ENCODE measurements at regions of chr2 and their contacts with region 1.

Region 1: DNA sequence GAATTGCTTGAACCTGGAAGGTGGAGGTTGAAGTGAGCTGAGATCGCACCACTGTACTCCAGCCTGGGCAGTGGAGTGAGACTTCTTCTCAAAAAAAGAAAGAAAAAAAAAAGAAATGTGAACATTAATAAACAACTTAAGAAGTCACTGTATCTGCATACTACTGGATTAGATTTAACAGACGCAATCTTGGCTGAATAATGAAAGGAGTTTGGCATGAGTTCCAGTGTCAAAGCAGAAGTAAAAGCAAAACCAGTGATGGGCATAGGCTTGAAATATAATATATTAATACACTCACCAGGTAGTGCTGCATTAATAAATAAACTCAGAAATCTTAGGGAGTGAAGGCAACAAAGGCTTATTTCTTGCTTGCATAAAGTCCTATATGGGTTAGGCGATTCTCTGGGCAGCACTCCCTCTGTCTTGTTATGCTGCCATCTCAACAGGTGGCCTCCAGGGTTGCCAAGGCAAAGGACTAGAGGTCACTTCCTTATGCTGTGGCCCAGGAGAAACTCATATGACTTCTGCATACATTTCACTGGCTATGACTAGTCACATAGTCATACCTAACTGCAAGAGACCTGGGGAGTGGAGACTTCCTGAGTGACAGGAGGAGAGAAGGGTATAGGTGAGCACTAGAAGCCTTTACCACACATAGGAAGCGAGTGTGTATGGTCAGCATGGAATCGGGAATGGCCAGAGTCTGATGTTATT is 296.2 kb upstream of the SPRED2 start:
- DNase-seq: peak; percentile 95
- ATAC-seq: peak; percentile 90
- H3K4me3 ChIP-seq: no peak overlapping the region
- H3K27ac ChIP-seq: peak overlapping the region; percentile 55
- H3K4me1 ChIP-seq: peaks cover 49% of the 10 kb centered on the region
- H3K27me3 ChIP-seq: no peaks in the 10 kb centered on the region; the same call in 1 of the 2 replicates
- CTCF ChIP-seq: no peak; the same call in 1 of the 2 replicates

Region 2: DNA sequence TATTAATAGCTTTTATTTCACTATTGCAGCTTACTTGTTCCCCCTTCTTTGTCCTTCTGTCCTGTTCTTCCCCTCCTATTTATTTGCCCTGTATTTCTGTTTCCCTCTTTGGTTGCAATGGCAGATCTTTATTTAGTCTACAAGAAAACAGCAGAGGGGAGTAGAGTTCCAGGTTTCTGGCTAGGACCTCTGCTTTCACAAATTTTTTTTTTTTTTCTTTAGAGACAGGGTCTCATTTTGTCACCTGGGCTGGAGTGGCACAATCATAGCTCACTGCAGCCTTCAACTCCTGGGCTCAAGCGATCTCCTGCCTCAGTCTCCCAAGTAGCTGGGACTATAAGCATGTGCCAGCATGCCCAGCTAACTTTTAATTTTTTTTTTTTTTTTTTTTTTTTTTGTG is 108.1 kb before region 1 on chr2:
- CTCF ChIA-PET with region 1: no interaction called
- POLR2A ChIA-PET with region 1: no interaction called
- intact Hi-C with region 1: no loop called
- DNase-seq: peak; percentile 16
- ATAC-seq: 0 out of 2 replicates have a peak, but pooled peaks have one; percentile 33
- H3K4me3 ChIP-seq: no peak overlapping the region
- H3K27ac ChIP-seq: no peak overlapping the region
- H3K4me1 ChIP-seq: no peaks in the 10 kb centered on the region
- H3K27me3 ChIP-seq: peaks cover 25% of the 10 kb centered on the region
- CTCF ChIP-seq: peak; percentile 42; the same call in 1 of the 2 replicates

Region 3: GRCh38 chr2:65662654-65663432 is 65.8 kb before region 1 on chr2:
- CTCF ChIA-PET with region 1: no interaction called
- POLR2A ChIA-PET with region 1: no interaction called
- intact Hi-C with region 1: loop called (anchors 2 kb)
- DNase-seq: peak; percentile 93
- ATAC-seq: peak; percentile 90
- H3K4me3 ChIP-seq: peak overlapping the region; percentile 55
- H3K27ac ChIP-seq: peak overlapping the region; percentile 78
- H3K4me1 ChIP-seq: peaks cover 38% of the 10 kb centered on the region
- H3K27me3 ChIP-seq: no peaks in the 10 kb centered on the region
- CTCF ChIP-seq: no peak

Measured in PC-3 (cell line).